ENCODE measurements at regions of chr2 and their contacts with region 1.

Region 1: GRCh38 chr2:28392297-28393113 is at the start of gene FOSL2:
- DNase-seq: peak; percentile 96 to 98
- H3K4me3 ChIP-seq: peak within 1 kb of the TSS; percentile 71 to 95
- H3K27ac ChIP-seq: peak within 1 kb of the TSS; percentile 99 to 100
- H3K4me1 ChIP-seq: no peaks in the 10 kb centered on the region
- H3K27me3 ChIP-seq: no peaks in the 10 kb centered on the region
- CTCF ChIP-seq: peak in 1 of 4 experiments; percentile 5
- POLR2A ChIP-seq: peak; percentile 99
- total RNA-seq, gene FOSL2: 39.8 to 134 (median 58.7) TPM

Region 2: DNA sequence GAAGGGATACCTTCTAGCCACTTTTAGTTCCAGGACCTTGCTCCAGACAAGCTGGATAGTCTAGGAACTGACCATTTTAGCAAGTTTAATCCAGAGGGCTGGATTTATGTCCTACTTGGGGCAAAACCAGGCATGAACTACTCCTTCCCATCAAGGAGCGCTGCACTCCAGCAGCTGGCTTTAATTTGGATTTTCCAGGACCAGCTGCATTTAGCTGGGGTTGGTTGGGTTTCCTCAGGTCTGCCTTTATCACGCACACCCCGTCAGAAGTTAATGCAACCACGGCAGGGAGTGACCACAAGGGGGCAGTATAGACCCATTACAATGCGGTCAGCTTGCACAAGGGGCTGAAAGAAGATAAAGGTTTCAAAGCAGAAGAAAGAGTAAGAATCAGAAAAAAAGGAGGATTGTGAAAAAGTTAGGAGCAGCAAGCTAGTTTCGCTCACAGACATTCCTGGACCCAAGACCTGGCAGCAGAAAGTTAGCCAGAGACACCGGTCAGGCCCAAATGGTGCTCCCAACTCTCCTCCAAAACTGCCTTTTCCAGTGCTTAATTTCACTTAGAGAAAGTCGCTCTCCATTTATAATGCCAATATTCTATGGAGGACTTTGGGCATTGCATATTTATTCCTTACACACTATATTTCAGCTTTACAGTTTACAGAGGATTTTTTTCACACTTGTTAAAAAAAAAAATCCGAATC is 688.7 kb before region 1 on chr2:
- intact Hi-C with region 1: loop called (anchors 5 kb)
- DNase-seq: peak; percentile 87 to 90
- H3K4me3 ChIP-seq: no peak overlapping the region
- H3K27ac ChIP-seq: peak overlapping the region; percentile 49 to 91
- H3K4me1 ChIP-seq: no peaks in the 10 kb centered on the region
- H3K27me3 ChIP-seq: no peaks in the 10 kb centered on the region
- CTCF ChIP-seq: peak; percentile 89 to 95 (median 90)
- POLR2A ChIP-seq: no peak

Region 3: DNA sequence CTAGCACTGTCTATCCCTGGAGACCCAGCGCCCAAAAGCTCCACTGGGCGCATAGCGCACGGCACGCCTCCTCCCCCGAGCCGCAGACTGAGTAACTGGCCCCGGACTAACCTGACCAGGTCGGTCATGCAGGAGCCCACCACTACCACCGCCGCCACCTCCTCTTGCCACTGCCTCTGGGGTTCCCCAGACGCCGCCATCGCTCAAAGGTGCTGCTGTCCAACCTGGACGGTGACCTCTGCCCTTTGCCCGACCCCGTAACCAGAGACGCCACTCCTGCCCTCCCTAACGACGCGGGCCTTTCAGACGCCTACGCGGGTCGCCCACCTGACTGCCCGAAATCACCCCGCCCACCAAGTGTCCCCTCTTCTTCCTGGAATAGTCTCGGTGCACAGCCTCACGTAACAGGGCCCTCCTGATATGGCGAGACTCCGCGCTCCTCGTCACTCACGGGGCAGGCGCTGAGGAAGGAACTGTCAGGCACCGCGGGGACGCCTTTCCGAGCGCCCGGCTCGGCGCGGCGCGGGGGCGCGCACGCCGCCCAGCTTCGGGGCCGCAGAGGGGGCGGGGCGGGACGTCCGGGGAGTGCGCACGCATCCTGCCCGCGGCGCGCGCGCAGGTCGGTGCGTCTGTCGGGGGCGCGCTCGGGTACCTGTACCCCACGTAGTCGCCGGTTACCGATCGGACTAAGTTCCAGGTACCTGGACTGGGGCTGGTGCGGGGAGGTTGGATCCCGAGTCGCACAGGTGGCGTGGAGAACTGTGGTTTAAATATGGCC is 502.2 kb before region 1 on chr2 and contains the starts of genes BABAM2 and RBKS:
- intact Hi-C with region 1: loop called (anchors 10 kb)
- DNase-seq: peak; percentile 85 to 89
- H3K4me3 ChIP-seq: peak within 1 kb of the TSS; percentile 78 to 81
- H3K27ac ChIP-seq: peak within 1 kb of the TSS; percentile 96
- H3K4me1 ChIP-seq: peaks cover 0 to 7% of the 10 kb centered on the region in 2 donors
- H3K27me3 ChIP-seq: no peaks in the 10 kb centered on the region
- CTCF ChIP-seq: peak in 3 of 4 experiments; percentile 7 to 18 (median 8)
- POLR2A ChIP-seq: peak; percentile 87 to 93
- total RNA-seq, gene BABAM2: 24.1 to 62.1 (median 32.5) TPM
- total RNA-seq, gene RBKS: 1.6 to 5.4 (median 3.3) TPM

Region 4: GRCh38 chr2:28080911-28081310 is 311.6 kb before region 1 on chr2:
- intact Hi-C with region 1: loop called (anchors 10 kb)
- DNase-seq: peak; percentile 24 to 67
- H3K4me3 ChIP-seq: no peak overlapping the region
- H3K27ac ChIP-seq: peak overlapping the region; percentile 88 to 93
- H3K4me1 ChIP-seq: peaks cover 17 to 18% of the 10 kb centered on the region in 2 donors
- H3K27me3 ChIP-seq: no peaks in the 10 kb centered on the region
- CTCF ChIP-seq: no peak
- POLR2A ChIP-seq: peak; percentile 13 to 56

Region 5: DNA sequence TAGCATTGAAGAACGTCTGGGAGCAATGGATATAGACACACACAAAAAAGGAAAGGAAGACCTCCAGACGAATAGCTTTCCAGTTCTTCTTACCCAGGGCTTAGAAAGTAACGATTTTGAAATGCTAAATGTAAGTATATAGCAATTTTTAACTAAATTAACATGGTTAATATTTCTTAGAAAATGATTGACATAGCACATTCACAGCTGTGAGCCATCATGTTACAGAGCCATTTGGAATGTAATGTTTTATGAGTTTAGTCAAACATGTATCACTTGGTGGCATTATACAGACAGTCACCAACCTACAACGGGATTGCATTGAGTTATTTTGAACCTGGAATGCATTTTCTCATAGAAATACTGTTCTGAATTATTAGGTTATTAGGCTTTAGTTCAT is 537.1 kb after region 1 on chr2:
- intact Hi-C with region 1: no loop called
- DNase-seq: no peak
- H3K4me3 ChIP-seq: no peak overlapping the region
- H3K27ac ChIP-seq: no peak overlapping the region
- H3K4me1 ChIP-seq: no peaks in the 10 kb centered on the region
- H3K27me3 ChIP-seq: no peaks in the 10 kb centered on the region
- CTCF ChIP-seq: no peak
- POLR2A ChIP-seq: no peak